ENCODE measurements at regions of chr1 and their contacts with region 1.

Region 1: GRCh38 chr1:84122780-84123382 is 21.2 kb upstream of the PRKACB start:
- DNase-seq: peak; percentile 52
- H3K4me3 Mint-ChIP-seq: no peak overlapping the region
- H3K27ac Mint-ChIP-seq: no peak overlapping the region
- H3K4me1 Mint-ChIP-seq: no peaks in the 10 kb centered on the region
- H3K27me3 Mint-ChIP-seq: peaks cover 4% of the 10 kb centered on the region

Region 2: GRCh38 chr1:83931658-83932253 is 191.1 kb before region 1 on chr1:
- CTCF ChIA-PET with region 1: interaction called, 17 read pairs
- POLR2A ChIA-PET with region 1: no interaction called
- DNase-seq: no peak
- H3K4me3 Mint-ChIP-seq: no peak overlapping the region
- H3K27ac Mint-ChIP-seq: no peak overlapping the region
- H3K4me1 Mint-ChIP-seq: no peaks in the 10 kb centered on the region
- H3K27me3 Mint-ChIP-seq: peaks cover 12% of the 10 kb centered on the region

Region 3: DNA sequence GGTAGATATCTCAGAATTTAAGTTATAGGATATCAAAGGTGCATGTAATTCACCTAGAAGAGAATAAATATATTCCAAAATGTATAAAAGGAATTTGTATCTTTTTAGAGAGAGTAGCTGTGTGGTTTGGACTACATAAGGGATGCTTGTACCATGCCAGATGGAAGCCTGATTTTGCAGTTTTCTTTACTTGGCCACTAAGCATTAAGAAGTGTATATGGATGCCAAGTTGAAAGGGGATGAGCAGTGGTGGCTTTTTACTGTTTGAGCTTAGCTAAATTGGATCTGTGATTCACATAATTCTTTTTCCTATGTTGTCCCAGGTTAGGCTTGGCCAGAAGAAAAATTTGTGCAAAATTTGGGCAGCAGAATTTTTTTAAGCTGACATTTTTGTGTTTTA is 80.4 kb before region 1 on chr1:
- CTCF ChIA-PET with region 1: no interaction called
- POLR2A ChIA-PET with region 1: no interaction called
- DNase-seq: no peak
- H3K4me3 Mint-ChIP-seq: no peak overlapping the region
- H3K27ac Mint-ChIP-seq: no peak overlapping the region
- H3K4me1 Mint-ChIP-seq: no peaks in the 10 kb centered on the region
- H3K27me3 Mint-ChIP-seq: peaks cover 3% of the 10 kb centered on the region

Region 4: GRCh38 chr1:84143796-84144565 is 21.1 kb after region 1 on chr1 and contains the start of gene PRKACB:
- CTCF ChIA-PET with region 1: no interaction called
- POLR2A ChIA-PET with region 1: no interaction called
- DNase-seq: no peak
- H3K4me3 Mint-ChIP-seq: peak within 1 kb of the TSS; percentile 90
- H3K27ac Mint-ChIP-seq: peak within 1 kb of the TSS; percentile 95
- H3K4me1 Mint-ChIP-seq: peaks cover 30% of the 10 kb centered on the region
- H3K27me3 Mint-ChIP-seq: no peaks in the 10 kb centered on the region
- total RNA-seq, gene PRKACB: 74.7 to 77.4 TPM

Measured in activated CD4-positive, alpha-beta memory T cell treated with anti-CD3 and anti-CD28 coated beads, Interleukin-2, amount 10 ng/mL, durations not matched to agents 7 days and 5 days (primary cell).